Activated naive CD4-positive, alpha-beta T cell treated with anti-CD3 and anti-CD28 coated beads for 36 hours (primary cell): ENCODE measurements at regions of chr16 and their contacts with region 1.

Region 1: GRCh38 chr16:11356573-11357331 is 11.5 kb downstream of the RMI2 start:
- DNase-seq: peak; percentile 78
- H3K4me3 Mint-ChIP-seq: no peak overlapping the region
- H3K27ac Mint-ChIP-seq: peak overlapping the region; percentile 28
- H3K4me1 Mint-ChIP-seq: peaks cover 63% of the 10 kb centered on the region
- H3K27me3 Mint-ChIP-seq: no peaks in the 10 kb centered on the region

Region 2: DNA sequence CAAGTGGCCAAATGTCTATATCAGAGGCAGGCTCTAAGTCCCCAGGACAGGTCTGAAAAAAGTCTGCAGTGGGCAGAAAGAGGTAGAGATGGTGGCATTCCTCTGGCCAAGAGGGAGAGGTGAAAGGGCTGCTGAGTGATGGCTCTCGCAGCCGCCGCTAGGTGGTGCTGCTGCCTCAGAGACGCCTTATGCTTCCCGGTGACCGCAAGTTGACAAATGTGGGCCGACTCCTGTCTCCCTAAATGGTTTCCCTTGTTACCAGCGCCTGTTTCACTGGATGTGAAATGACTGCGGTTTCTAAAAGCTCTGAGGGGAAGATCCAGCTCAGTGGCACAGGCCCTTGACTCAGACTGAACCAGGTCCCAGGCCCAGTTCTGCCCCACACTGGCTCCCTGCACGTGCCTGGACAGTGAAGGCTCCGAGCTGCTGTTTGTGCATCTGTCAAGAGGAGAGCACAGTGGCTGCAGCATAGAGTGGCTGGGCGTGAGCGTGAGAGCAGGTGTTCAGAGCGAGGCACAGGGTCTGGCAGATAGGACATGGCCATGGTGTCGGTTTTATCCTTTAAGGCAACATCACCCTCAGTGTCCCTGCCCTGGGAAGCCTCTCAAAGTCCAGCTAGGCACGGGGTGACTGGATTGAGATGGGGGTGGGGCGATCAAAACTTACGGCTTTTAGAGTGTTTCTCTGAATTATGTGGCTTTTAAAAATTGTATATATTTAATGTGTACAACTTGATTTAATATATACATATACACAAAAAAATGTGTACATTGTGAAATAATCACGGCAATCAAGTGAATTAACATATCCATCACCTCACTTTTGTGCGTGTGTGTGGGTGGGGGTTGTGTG is 392.5 kb before region 1 on chr16:
- CTCF ChIA-PET with region 1: interaction called, 16 read pairs
- intact Hi-C with region 1: loop called (anchors 1 kb)
- DNase-seq: peak; percentile 92
- H3K4me3 Mint-ChIP-seq: peak overlapping the region; percentile 43
- H3K27ac Mint-ChIP-seq: peak overlapping the region; percentile 92
- H3K4me1 Mint-ChIP-seq: peaks cover 39% of the 10 kb centered on the region
- H3K27me3 Mint-ChIP-seq: no peaks in the 10 kb centered on the region

Region 3: DNA sequence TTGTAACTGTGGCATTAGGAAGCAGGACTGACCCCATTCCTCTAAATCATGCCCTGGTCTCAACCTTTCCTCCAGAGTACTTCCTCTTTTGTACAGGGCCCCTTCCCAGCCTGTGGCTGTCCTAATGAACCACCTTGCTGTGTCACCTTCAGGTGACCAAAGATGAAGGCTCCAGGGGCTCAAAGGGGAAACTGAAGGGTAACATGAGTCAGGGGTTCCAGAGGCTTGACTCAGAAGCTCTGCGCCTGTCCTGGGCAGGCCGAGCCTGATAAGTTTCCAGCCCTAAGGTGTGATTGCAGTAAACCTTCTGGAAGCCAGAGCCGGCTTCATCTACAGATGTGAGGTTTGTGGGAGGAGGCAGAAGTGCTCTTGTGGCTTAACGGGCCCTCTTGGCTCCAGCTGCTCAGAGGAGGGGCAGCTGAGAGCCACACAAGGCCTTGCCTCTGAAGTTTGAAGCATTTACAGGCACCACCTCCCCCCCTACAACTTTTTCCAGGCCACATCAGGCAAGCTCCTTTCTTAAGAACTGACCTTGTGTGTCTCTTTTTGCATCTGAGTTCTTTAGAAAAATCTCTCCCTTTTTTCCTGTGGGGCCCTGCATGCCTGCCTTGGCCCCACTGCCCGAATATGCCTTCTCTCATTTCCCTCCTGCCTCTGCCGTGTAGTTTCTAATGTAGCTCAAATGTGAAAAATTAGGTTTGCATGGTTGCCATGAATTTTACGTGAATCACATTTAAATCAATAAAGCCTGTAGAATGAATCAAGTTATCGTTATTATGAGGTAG is 262.5 kb before region 1 on chr16:
- CTCF ChIA-PET with region 1: no interaction called
- intact Hi-C with region 1: loop called (anchors 1 kb)
- DNase-seq: peak; percentile 88
- H3K4me3 Mint-ChIP-seq: peak overlapping the region; percentile 11
- H3K27ac Mint-ChIP-seq: peak overlapping the region; percentile 95
- H3K4me1 Mint-ChIP-seq: peaks cover 68% of the 10 kb centered on the region
- H3K27me3 Mint-ChIP-seq: no peaks in the 10 kb centered on the region

Region 4: GRCh38 chr16:11285842-11286241 is 70.9 kb before region 1 on chr16:
- CTCF ChIA-PET with region 1: interaction called, 3 read pairs
- intact Hi-C with region 1: loop called (anchors 1 kb)
- DNase-seq: no peak
- H3K4me3 Mint-ChIP-seq: no peak overlapping the region
- H3K27ac Mint-ChIP-seq: peak overlapping the region; percentile 67
- H3K4me1 Mint-ChIP-seq: peaks cover 25% of the 10 kb centered on the region
- H3K27me3 Mint-ChIP-seq: no peaks in the 10 kb centered on the region

Region 5: DNA sequence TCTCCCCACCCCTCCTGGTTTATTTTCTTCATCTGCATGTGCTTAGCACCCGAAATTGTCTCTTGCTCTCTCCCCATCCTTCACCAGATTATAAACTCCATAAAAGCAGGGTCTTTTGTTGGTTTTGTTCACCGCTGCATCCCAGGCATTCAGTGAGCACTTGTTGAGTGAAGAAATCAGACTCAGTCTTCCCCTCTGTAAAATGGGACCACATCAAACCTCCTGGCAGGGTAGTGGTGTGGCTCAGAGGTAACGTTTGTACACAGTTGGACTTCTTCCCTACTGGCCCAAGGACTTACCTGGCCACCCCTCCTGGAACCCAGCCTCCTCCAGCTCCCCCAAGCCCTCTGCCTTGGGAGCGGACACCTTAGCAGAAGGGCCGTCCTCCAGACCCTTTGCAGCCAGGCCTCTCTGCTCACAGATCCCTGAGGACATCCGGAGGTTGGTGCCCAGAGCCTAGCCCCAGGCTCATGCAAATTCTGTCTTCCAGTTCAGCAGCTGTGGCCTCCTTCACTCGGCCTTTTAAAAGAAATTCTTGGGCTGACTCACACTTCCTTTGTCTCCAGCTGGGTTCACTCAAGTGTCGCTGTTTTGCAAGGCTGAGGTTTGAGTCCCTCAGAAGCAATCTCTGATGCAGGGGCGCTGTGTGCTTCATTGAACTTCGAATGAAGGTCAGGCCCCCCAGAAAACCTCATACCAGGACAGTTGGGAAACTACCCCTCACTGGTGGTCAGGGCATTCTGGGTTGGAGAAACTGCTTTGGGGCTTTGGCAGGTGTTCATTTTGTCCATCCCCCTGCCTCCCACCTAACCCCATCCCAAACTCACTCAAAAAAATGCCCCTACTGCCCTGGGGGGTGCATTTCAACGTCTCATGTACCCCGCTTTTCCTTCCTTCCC is 28.3 kb before region 1 on chr16:
- CTCF ChIA-PET with region 1: interaction called, 5 read pairs
- intact Hi-C with region 1: loop called (anchors 1 kb)
- DNase-seq: peak; percentile 75
- H3K4me3 Mint-ChIP-seq: peak overlapping the region; percentile 36
- H3K27ac Mint-ChIP-seq: peak overlapping the region; percentile 13
- H3K4me1 Mint-ChIP-seq: peaks cover 47% of the 10 kb centered on the region
- H3K27me3 Mint-ChIP-seq: no peaks in the 10 kb centered on the region